ENCODE measurements at regions of chr17 and their contacts with region 1.

Region 1: GRCh38 chr17:74042744-74043486 is 160.6 kb upstream of the RPL38 start:
- DNase-seq: no peak
- H3K4me3 ChIP-seq: no peak overlapping the region
- H3K27ac ChIP-seq: no peak overlapping the region
- H3K4me1 ChIP-seq: no peaks in the 10 kb centered on the region
- H3K27me3 ChIP-seq: no peaks in the 10 kb centered on the region
- CTCF ChIP-seq: no peak
- EP300 ChIP-seq: no peak
- POLR2A ChIP-seq: no peak
- RAD21 ChIP-seq: no peak

Region 2: GRCh38 chr17:74028354-74029116 is 14.4 kb before region 1 on chr17:
- CTCF ChIA-PET with region 1: interaction called, 15 read pairs
- POLR2A ChIA-PET with region 1: interaction called, 4 read pairs
- DNase-seq: no peak
- H3K4me3 ChIP-seq: no peak overlapping the region
- H3K27ac ChIP-seq: no peak overlapping the region
- H3K4me1 ChIP-seq: peaks cover 0 to 12% (median 4%) of the 10 kb centered on the region in 4 experiments; a peak in 5 of 7 replicates
- H3K27me3 ChIP-seq: no peaks in the 10 kb centered on the region; a peak in 1 of 7 replicates
- CTCF ChIP-seq: no peak
- EP300 ChIP-seq: no peak
- POLR2A ChIP-seq: no peak
- RAD21 ChIP-seq: no peak

Measured in H1 (cell line).